Heart right ventricle (tissue), 16 donors: ENCODE measurements at regions of chr14 and their contacts with region 1.

Region 1: DNA sequence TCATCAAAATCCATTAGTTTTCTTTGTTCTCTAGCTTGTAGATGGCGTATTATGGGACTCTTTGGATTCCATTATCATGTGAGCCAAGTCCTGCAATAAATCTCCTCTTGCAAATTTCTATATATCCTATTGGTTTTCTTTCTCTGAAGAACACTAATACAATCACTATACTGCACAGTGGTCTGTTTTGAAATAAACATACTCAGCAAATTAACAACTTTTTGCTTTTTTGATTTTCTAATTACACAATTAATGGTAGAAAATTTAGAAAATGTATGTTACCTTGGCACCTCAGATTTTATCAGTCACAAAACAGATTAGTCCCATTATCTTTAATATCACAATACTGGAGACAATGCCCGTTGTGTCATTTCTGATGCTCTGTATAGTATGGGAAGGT is 513.2 kb upstream of the MIS18BP1 start:
- DNase-seq: no peak
- ATAC-seq: no peak
- H3K4me3 ChIP-seq: no peak overlapping the region
- H3K27ac ChIP-seq: no peak overlapping the region
- H3K4me1 ChIP-seq: no peaks in the 10 kb centered on the region
- H3K27me3 ChIP-seq: no peaks in the 10 kb centered on the region
- CTCF ChIP-seq: no peak

Region 2: DNA sequence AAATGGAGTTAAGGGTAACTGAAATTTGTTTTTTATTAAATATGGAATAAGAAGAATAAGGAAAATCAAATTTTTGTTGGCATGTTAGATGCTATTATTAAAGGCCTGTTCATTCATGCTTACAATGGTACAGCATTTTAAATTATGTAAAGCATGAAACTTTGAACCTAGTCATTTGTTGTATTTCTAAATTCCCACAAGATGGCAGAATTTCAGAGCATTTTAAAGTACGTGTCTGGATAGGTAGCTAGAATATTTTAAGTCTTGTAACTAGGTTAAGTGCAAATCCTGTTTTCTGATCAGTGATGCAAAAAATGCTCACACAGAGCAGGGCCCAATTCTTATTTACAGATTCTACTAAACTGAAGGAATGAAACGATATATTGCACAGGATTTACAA is 72.3 kb after region 1 on chr14:
- intact Hi-C with region 1: loop called in 1 of 10 experiments (anchors 10 kb)
- DNase-seq: no peak
- ATAC-seq: no peak
- H3K4me3 ChIP-seq: no peak overlapping the region
- H3K27ac ChIP-seq: no peak overlapping the region
- H3K4me1 ChIP-seq: no peaks in the 10 kb centered on the region
- H3K27me3 ChIP-seq: no peaks in the 10 kb centered on the region
- CTCF ChIP-seq: no peak